ENCODE measurements at regions of chr20 and their contacts with region 1.

Region 1: GRCh38 chr20:9616833-9617489 is 102.6 kb downstream of the LAMP5 start:
- DNase-seq: peak; percentile 48 to 87 (median 76)
- H3K4me3 ChIP-seq: no peak overlapping the region
- H3K27ac ChIP-seq: no peak overlapping the region
- H3K4me1 ChIP-seq: no peaks in the 10 kb centered on the region
- H3K27me3 ChIP-seq: no peaks in the 10 kb centered on the region
- CTCF ChIP-seq: peak; percentile 73 to 90 (median 87)
- POLR2A ChIP-seq: no peak

Region 2: DNA sequence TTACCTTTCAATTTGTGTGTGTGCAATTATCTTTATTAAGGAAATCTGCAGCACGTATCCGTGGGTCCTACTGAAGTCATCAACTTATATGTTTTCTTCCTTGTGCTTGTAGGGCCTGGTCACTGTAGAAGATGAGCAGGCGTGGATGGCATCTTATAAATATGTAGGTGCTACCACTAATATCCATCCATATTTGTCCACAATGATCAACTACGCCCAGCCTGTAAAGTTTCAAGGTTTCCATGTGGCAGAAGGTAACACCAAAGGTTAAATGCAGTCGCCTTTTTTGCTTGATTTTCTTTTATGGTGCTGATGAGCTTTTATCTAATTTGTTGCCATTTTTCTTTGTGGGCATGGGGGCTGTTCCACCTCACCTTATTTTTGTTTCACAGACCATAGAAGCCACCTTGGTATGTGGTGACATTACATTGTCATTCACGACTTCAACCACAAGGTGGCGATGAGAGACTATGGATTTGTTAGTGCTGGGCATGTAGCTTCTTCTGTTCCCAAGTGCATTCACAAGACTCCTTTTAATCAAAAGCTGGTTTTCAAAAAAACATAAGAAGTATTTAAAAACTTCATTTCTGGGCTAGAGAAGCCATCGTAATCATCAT is 209.0 kb before region 1 on chr20:
- intact Hi-C with region 1: loop called in 1 of 2 experiments (anchors 10 kb)
- DNase-seq: peak; percentile 43 to 88 (median 68)
- H3K4me3 ChIP-seq: no peak overlapping the region
- H3K27ac ChIP-seq: no peak overlapping the region
- H3K4me1 ChIP-seq: no peaks in the 10 kb centered on the region
- H3K27me3 ChIP-seq: no peaks in the 10 kb centered on the region
- CTCF ChIP-seq: peak; percentile 86 to 92 (median 90)
- POLR2A ChIP-seq: no peak

Region 3: GRCh38 chr20:9672981-9673380 is 56.0 kb after region 1 on chr20:
- intact Hi-C with region 1: no loop called
- DNase-seq: no peak
- H3K4me3 ChIP-seq: no peak overlapping the region
- H3K27ac ChIP-seq: no peak overlapping the region
- H3K4me1 ChIP-seq: peaks cover 0 to 7% of the 10 kb centered on the region in 2 donors
- H3K27me3 ChIP-seq: no peaks in the 10 kb centered on the region
- CTCF ChIP-seq: no peak
- POLR2A ChIP-seq: no peak

Region 4: DNA sequence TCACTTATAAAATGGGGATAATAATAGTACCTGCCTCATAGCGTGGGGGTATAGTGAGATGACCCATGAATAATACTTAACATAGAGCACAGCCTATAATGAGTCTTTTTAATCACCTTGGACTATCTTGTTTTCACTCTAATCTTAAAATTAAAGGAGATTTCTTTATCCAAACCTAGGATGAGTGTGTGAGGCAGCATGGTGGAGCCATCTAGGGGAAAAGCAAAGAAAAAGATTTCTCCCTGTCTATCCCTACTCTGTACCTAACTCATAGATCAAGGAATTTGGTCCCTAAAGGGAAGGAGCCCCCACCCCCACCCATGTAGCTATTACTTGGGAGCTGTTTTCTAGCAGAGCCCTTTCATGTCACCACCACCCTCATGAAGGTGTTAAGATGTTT is 267.1 kb after region 1 on chr20:
- intact Hi-C with region 1: loop called (anchors 2 to 10 kb)
- DNase-seq: peak in 2 of 7 donors; percentile 9 to 11
- H3K4me3 ChIP-seq: no peak overlapping the region
- H3K27ac ChIP-seq: no peak overlapping the region
- H3K4me1 ChIP-seq: no peaks in the 10 kb centered on the region
- H3K27me3 ChIP-seq: no peaks in the 10 kb centered on the region
- CTCF ChIP-seq: peak; percentile 20 to 46 (median 26)
- POLR2A ChIP-seq: no peak

Region 5: DNA sequence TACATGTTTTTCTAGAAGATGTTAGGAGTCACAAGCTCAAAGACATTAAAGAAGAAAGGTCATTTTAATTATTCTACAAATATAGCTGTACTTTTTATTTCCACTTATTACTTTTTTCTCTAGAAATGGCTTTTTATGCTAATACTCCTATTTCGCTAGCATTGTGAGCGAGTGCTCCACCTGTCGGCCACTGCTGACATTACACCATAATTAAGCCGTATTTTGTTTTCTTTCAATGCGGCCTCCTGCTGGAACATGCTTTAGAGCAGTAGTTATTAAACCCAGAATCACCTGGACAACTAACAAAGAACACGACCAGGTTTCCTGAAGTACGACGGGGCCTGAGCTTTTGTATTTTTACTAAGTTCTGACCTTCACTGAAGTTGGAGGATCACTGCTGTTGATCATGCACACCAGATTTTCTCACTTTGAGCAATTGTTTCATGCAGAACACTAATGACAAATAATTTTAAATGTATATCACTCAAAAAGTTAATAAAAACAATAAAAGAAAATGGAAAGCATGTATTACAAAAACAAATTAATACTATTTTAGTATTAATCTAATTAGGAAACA is 296.0 kb after region 1 on chr20:
- intact Hi-C with region 1: loop called (anchors 10 kb)
- DNase-seq: peak; percentile 26 to 78 (median 61)
- H3K4me3 ChIP-seq: no peak overlapping the region
- H3K27ac ChIP-seq: no peak overlapping the region
- H3K4me1 ChIP-seq: no peaks in the 10 kb centered on the region
- H3K27me3 ChIP-seq: peaks cover 10% of the 10 kb centered on the region
- CTCF ChIP-seq: peak; percentile 70 to 84 (median 76)
- POLR2A ChIP-seq: no peak

Region 6: DNA sequence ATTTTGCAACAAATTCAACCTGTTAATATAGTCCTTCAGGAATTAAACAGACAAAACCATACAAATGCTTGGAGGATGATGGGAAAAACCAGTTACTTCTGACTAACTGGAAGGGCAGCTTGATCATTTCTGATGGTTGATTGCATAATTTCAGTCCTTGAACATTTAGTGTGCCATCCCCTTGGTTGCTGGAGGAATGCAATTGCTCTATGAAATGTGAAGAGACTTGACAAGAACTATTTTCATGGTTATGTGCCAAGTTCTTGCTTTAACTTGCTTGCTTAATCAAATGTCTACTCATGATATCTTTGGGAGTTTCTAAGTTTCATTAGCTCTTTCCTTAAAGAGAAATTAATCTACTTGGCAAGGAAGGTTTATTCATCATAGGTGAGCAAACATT is 463.0 kb after region 1 on chr20:
- intact Hi-C with region 1: loop called in 1 of 2 experiments (anchors 10 kb)
- DNase-seq: peak in 1 of 7 donors; percentile 30
- H3K4me3 ChIP-seq: no peak overlapping the region
- H3K27ac ChIP-seq: no peak overlapping the region
- H3K4me1 ChIP-seq: no peaks in the 10 kb centered on the region
- H3K27me3 ChIP-seq: no peaks in the 10 kb centered on the region
- CTCF ChIP-seq: no peak
- POLR2A ChIP-seq: no peak

Measured in adrenal gland (tissue), 19 donors.